ENCODE measurements at regions of chr12 and their contacts with region 1.

Region 1: GRCh38 chr12:4107436-4107878 is 166.1 kb upstream of the CCND2 start:
- DNase-seq: peak; percentile 27 to 51
- ATAC-seq: peak; percentile 66 to 90; a peak in 4 of 6 replicates
- H3K4me3 ChIP-seq: no peak overlapping the region
- H3K27ac ChIP-seq: no peak overlapping the region
- H3K4me1 ChIP-seq: no peaks in the 10 kb centered on the region
- CTCF ChIP-seq: peak; percentile 31; the same call in 2 of the 3 replicates
- EP300 ChIP-seq: no peak
- POLR2A ChIP-seq: no peak
- RAD21 ChIP-seq: peak in 1 of 2 experiments; percentile 43; a peak in 2 of 5 replicates

Region 2: DNA sequence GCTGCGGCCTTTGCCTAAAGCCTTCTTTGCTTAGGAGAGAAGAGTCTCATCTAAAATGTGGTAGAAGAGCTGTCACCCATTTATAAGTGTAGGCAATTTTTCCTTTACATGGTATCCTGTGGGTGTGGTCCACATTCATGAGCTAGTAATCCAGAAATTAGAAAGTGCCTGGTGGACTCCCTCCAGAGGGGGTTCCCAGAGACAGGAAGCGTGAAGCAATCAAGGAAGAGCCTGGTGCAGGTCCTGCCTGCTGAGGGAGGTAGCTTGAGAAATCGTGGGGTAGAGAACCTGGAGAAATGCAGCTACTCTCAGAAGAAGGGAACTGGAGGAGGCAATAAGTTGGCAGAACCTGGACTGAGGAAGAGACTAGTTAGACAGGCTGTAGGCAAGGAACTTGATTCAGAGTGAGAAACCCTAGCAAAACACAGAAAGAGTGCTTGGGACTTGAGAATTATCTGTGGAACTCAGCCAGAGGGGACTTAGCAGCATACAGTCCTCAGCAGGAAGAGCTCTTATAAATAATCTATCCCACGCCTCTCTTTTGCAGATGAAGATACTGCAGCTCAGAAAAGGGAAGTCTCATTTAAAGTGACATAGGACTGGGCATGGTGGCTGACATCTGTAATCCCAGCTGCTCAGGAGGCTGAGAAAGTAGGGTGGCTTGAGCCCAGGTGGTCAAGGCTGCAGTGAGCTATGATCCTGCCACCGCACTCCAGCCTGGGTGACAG is 16.3 kb before region 1 on chr12:
- CTCF ChIA-PET with region 1: interaction called, 11 read pairs
- POLR2A ChIA-PET with region 1: no interaction called
- DNase-seq: no peak
- ATAC-seq: no peak
- H3K4me3 ChIP-seq: no peak overlapping the region
- H3K27ac ChIP-seq: no peak overlapping the region
- H3K4me1 ChIP-seq: no peaks in the 10 kb centered on the region
- CTCF ChIP-seq: no peak
- EP300 ChIP-seq: no peak
- POLR2A ChIP-seq: no peak
- RAD21 ChIP-seq: no peak

Region 3: GRCh38 chr12:4141348-4142270 is 34.2 kb after region 1 on chr12:
- CTCF ChIA-PET with region 1: no interaction called
- POLR2A ChIA-PET with region 1: no interaction called
- DNase-seq: no peak
- ATAC-seq: no peak
- H3K4me3 ChIP-seq: no peak overlapping the region
- H3K27ac ChIP-seq: no peak overlapping the region
- H3K4me1 ChIP-seq: no peaks in the 10 kb centered on the region
- CTCF ChIP-seq: no peak
- EP300 ChIP-seq: no peak
- POLR2A ChIP-seq: no peak
- RAD21 ChIP-seq: no peak

Measured in A549 (cell line).